ENCODE measurements at regions of chr19 and their contacts with region 1.

Region 1: DNA sequence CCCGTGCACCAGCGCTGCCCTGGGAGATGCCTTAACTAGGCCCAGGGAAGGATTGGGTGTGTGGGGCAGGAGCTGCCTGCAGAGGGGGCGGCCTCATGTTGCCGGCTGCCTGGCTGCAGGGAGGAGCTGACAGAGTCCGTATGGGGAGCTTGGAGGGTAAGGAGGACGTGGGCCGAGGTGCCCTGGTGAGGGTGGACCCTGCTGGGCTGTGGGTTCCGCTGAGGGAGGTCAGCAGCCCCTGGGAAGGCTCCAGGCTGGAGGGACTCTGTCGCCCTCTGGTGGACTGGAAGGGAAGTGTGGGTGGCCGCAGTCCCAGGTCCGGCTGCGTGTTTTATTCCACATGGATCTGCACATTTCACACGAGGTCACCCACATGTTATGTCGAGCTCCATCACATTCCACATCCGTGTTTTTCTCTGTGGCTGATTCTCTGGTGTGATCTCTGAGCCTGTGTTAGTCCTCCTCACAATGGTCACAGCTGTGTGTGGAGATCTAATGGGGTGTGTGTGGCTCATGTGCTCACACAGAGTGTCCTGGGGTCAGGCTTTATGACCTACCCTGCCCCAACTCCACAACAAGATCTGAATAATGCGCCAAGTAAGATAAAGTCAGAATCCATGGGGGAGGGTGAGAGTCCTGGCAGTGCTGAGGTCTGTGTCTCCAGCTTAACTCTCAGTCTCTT is 1.8 kb upstream of the CEACAM8 start:
- DNase-seq: peak; percentile 70
- H3K4me3 ChIP-seq: no peak overlapping the region; a peak in 1 of 4 replicates
- H3K27ac ChIP-seq: no peak overlapping the region
- H3K4me1 ChIP-seq: no peaks in the 10 kb centered on the region
- H3K27me3 ChIP-seq: peaks cover 14% of the 10 kb centered on the region; the same call in 1 of the 2 replicates
- CTCF ChIP-seq: peak; percentile 88
- EP300 ChIP-seq: no peak
- RAD21 ChIP-seq: peak; percentile 53

Region 2: DNA sequence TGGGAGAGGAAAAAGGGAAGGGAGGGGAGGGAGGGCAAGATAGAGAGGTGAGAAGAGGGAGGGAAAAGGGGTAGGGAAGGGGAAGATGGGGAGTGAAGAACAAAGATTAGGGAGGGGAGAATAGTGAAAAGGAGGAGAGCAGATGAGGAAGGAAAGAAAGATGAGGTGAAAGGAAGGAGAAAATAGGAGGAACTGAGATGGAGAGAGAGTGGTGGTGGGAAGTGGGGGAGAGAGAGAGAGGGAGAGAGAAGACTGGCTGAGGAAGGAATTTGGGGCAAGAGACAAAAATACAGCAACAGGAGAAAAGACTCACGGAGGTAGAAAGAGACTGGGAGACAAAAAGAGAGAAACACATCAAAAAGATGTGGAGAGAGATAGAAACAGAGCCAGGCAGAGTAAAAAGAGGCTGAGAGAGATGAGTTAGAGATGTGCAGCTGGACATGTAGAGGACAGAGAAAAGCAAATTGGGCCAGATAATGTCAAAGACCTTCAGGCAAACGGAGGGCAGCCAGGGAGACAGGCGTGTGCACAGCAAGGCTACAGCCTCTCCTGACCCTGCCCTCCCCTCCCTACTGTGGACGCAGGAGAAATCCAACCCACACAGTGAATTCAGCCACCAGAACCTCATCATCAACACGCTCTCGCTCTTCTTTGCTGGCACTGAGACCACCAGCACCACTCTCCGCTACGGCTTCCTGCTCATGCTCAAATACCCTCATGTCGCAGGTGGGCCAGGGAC is 1654.9 kb before region 1 on chr19:
- CTCF ChIA-PET with region 1: no interaction called
- POLR2A ChIA-PET with region 1: no interaction called
- DNase-seq: no peak
- H3K4me3 ChIP-seq: no peak overlapping the region; a peak in 1 of 4 replicates
- H3K27ac ChIP-seq: peak overlapping the region in 1 of 2 experiments; percentile 47; a peak in 2 of 4 replicates
- H3K4me1 ChIP-seq: peaks cover 0 to 11% of the 10 kb centered on the region in 2 experiments; a peak in 1 of 4 replicates
- H3K27me3 ChIP-seq: no peaks in the 10 kb centered on the region
- CTCF ChIP-seq: no peak
- EP300 ChIP-seq: no peak
- RAD21 ChIP-seq: no peak

Region 3: DNA sequence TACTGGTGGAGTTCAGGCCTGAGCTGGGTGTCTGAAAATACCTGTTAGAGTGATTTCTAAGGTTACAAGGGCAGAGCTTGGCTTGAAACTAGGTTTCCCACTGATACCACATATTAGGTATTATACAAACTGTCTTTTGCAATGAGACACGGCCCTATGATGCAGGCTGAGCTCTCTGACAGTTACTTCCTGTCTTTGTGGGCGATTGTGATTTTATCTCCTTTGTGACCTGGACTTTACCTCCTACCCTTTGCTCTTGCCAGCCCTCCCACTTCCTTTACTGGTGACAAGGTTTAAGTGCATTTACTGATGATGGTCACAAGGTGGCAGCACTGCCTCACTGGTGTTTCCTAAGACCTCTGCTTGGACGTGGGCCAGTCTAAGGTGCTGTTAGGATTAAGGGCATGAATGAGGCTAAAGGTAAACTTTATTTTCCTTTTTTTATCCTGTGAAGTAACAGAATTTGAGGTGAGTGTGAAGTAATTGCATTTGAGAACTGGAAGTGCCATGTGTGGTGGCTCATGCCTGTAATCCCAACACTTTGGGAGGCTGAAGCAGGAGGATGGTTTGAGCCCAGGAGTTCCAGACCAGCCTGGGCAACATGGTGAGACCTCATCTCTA is 146.1 kb before region 1 on chr19:
- CTCF ChIA-PET with region 1: interaction called, 22 read pairs
- POLR2A ChIA-PET with region 1: no interaction called
- DNase-seq: peak; percentile 75
- H3K4me3 ChIP-seq: no peak overlapping the region; a peak in 1 of 4 replicates
- H3K27ac ChIP-seq: no peak overlapping the region
- H3K4me1 ChIP-seq: peaks cover 0 to 3% of the 10 kb centered on the region in 2 experiments; a peak in 2 of 4 replicates
- H3K27me3 ChIP-seq: no peaks in the 10 kb centered on the region; the same call in 1 of the 2 replicates
- CTCF ChIP-seq: peak; percentile 93
- EP300 ChIP-seq: no peak
- RAD21 ChIP-seq: peak; percentile 96

Region 4: DNA sequence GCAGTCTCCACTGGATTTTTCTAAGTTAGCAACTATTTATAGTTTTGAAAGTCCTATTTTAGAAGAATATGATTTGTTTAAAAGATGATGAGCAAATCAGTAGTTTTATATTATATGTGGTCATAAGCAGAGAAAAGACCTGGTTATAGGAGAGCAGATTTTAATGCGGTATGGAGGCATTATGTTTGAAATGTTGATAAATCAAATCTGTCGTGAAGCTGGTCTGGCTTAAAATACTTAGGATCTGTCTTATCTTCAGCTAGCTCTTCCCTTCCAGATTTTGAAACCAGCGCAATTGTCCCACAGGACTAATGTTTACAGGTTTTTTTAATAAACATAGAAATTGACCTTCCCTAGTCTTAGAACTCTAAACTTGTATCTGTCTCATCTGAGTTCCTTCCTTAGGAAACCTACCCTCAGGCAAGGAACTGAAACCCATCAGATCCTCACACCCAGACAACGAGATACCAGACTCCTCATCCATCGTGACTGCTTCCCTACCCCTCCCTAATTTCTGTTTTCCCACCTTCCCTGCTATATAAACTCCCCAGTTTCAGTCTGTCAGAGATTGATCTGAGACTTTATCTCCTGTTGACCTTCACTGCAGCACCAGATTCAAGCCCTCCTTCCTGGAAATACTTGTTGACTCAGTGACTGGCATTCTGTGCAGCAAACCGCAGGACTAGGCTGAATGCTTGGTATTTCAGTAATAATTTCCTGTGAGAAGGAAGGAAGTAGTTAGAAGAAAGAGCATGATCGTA is 116.0 kb before region 1 on chr19:
- CTCF ChIA-PET with region 1: no interaction called
- POLR2A ChIA-PET with region 1: no interaction called
- DNase-seq: no peak
- H3K4me3 ChIP-seq: no peak overlapping the region
- H3K27ac ChIP-seq: no peak overlapping the region; a peak in 1 of 4 replicates
- H3K4me1 ChIP-seq: peaks cover 0 to 4% of the 10 kb centered on the region in 2 experiments; a peak in 2 of 4 replicates
- H3K27me3 ChIP-seq: no peaks in the 10 kb centered on the region
- CTCF ChIP-seq: no peak
- EP300 ChIP-seq: no peak
- RAD21 ChIP-seq: no peak

Region 5: GRCh38 chr19:42568006-42568405 is 28.5 kb before region 1 on chr19:
- CTCF ChIA-PET with region 1: interaction called, 18 read pairs
- POLR2A ChIA-PET with region 1: no interaction called
- DNase-seq: no peak
- H3K4me3 ChIP-seq: no peak overlapping the region
- H3K27ac ChIP-seq: no peak overlapping the region
- H3K4me1 ChIP-seq: no peaks in the 10 kb centered on the region
- H3K27me3 ChIP-seq: peaks cover 30% of the 10 kb centered on the region
- CTCF ChIP-seq: no peak
- EP300 ChIP-seq: no peak
- RAD21 ChIP-seq: no peak

Region 6: DNA sequence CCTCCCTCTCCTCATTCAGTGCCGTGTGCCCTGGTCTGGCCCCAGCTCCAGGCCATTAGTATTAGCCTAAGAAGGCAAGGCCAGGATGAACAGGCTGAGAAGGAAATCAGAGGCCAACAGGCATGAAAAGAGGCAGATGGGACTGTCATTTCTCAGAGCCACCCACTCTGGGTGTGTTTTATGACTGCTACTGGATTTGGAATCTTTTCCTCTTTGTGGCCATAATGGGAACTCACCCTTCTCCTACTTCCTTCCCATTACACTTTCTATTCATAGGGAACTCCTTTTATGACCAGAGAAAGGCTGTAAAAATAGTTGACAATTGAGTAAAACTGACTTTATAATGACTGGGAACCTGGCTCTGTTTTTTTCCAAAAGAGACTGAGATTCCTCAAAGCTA is 19.5 kb before region 1 on chr19:
- CTCF ChIA-PET with region 1: interaction called, 11 read pairs
- POLR2A ChIA-PET with region 1: no interaction called
- DNase-seq: no peak
- H3K4me3 ChIP-seq: no peak overlapping the region
- H3K27ac ChIP-seq: no peak overlapping the region
- H3K4me1 ChIP-seq: no peaks in the 10 kb centered on the region
- H3K27me3 ChIP-seq: peaks cover 27% of the 10 kb centered on the region
- CTCF ChIP-seq: no peak
- EP300 ChIP-seq: no peak
- RAD21 ChIP-seq: no peak

Region 7: GRCh38 chr19:42584466-42584865 is 12.1 kb before region 1 on chr19:
- CTCF ChIA-PET with region 1: interaction called, 14 read pairs
- POLR2A ChIA-PET with region 1: no interaction called
- DNase-seq: no peak
- H3K4me3 ChIP-seq: no peak overlapping the region
- H3K27ac ChIP-seq: no peak overlapping the region
- H3K4me1 ChIP-seq: no peaks in the 10 kb centered on the region
- H3K27me3 ChIP-seq: peaks cover 11% of the 10 kb centered on the region; the same call in 1 of the 2 replicates
- CTCF ChIP-seq: no peak
- EP300 ChIP-seq: no peak
- RAD21 ChIP-seq: no peak

Region 8: GRCh38 chr19:42606660-42607351 is 10.3 kb after region 1 on chr19:
- CTCF ChIA-PET with region 1: interaction called, 23 read pairs
- POLR2A ChIA-PET with region 1: no interaction called
- DNase-seq: peak; percentile 76
- H3K4me3 ChIP-seq: peak overlapping the region in 1 of 2 experiments; percentile 46; a peak in 1 of 4 replicates
- H3K27ac ChIP-seq: no peak overlapping the region
- H3K4me1 ChIP-seq: no peaks in the 10 kb centered on the region
- H3K27me3 ChIP-seq: no peaks in the 10 kb centered on the region
- CTCF ChIP-seq: peak; percentile 67
- EP300 ChIP-seq: no peak
- RAD21 ChIP-seq: peak; percentile 53

Region 9: DNA sequence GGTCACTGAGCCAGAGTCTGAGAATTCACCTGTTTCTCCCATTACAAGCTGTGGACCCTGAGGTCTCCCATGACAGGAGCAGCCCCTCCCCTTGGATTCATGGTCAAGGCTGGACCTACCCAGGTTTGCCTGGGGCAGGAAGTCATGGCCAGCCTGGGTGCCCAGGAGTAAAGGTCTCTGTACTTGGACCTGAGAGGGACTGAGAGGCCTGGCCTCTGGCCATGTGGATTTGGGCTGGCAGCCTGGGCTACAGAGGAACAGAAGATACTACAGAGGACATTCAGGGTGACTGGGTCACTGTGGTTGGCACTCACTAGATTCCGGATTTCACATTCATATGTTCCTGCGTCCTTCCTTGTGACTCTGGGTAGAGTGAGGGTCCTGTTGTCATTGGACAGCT is 29.6 kb after region 1 on chr19:
- CTCF ChIA-PET with region 1: interaction called, 19 read pairs
- POLR2A ChIA-PET with region 1: no interaction called
- DNase-seq: no peak
- H3K4me3 ChIP-seq: no peak overlapping the region
- H3K27ac ChIP-seq: no peak overlapping the region
- H3K4me1 ChIP-seq: no peaks in the 10 kb centered on the region
- H3K27me3 ChIP-seq: peaks cover 9% of the 10 kb centered on the region; the same call in 1 of the 2 replicates
- CTCF ChIP-seq: no peak
- EP300 ChIP-seq: no peak
- RAD21 ChIP-seq: no peak

Region 10: GRCh38 chr19:42683917-42684513 is 87.5 kb after region 1 on chr19:
- CTCF ChIA-PET with region 1: no interaction called
- POLR2A ChIA-PET with region 1: no interaction called
- DNase-seq: peak; percentile 9
- H3K4me3 ChIP-seq: no peak overlapping the region; a peak in 1 of 4 replicates
- H3K27ac ChIP-seq: no peak overlapping the region
- H3K4me1 ChIP-seq: no peaks in the 10 kb centered on the region
- H3K27me3 ChIP-seq: no peaks in the 10 kb centered on the region; the same call in 1 of the 2 replicates
- CTCF ChIP-seq: peak; percentile 74
- EP300 ChIP-seq: no peak
- RAD21 ChIP-seq: 0 out of 2 replicates have a peak, but pooled peaks have one; percentile 10

Region 11: GRCh38 chr19:42695716-42696560 is 99.4 kb after region 1 on chr19:
- CTCF ChIA-PET with region 1: no interaction called
- POLR2A ChIA-PET with region 1: no interaction called
- DNase-seq: no peak
- H3K4me3 ChIP-seq: no peak overlapping the region
- H3K27ac ChIP-seq: no peak overlapping the region
- H3K4me1 ChIP-seq: no peaks in the 10 kb centered on the region
- H3K27me3 ChIP-seq: peaks cover 55% of the 10 kb centered on the region
- CTCF ChIP-seq: no peak
- EP300 ChIP-seq: no peak
- RAD21 ChIP-seq: no peak